Activated T-helper 2 cell treated with anti-CD3 and anti-CD28 coated beads, Interferon-gamma antibody, Interleukin-2, Interleukin-4, amounts not matched to agents 10 μg/mL and 5 μg/mL and 100 μg/mL, durations not matched to agents 14 hours and 24 hours and 36 hours (primary cell): ENCODE measurements at regions of chr12 and their contacts with region 1.

Region 1: DNA sequence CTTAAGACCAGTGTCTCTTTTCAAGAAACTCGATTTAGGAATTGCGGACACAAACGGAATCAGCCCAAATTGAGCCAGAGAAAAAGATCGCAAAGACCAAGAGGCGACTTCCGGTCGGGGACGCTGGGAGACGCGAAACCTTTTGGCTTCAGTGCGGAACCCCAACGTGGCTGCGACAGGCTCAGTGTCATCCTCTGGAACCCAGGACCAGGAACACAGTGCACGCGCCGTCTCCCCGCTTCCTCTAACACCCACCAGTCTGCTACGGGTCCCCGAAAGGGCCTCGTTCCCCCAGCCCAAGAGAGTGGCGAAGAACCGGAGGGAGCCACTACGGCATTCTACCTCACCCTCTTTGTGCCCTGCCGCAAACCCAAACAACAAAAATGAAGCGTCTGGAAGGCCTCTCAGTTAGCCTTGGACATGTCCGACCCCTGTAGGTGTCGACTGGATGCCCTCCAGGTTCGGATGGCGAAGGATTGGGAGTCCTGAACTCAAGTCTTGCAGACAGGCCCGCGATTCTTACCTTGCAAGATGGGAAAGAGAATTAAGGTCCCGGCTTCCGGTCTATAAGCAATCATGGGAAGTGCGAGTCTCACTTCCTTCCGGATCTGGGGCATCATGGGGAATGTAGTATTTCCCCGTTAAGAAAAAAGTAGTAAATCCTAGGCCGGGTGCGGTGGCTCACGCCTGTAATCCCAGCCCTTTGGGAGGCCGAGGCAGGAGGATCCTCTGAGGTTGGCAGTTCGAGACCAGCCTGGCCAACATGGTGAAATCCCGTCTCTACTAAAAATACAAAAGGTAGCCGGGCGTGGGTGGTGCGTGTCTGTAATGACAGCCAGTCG is at the start of gene RPL6:
- DNase-seq: peak; percentile 77
- H3K4me3 Mint-ChIP-seq: peak within 1 kb of the TSS; percentile 99
- H3K27ac Mint-ChIP-seq: peak within 1 kb of the TSS; percentile 100
- H3K4me1 Mint-ChIP-seq: peaks cover 27% of the 10 kb centered on the region
- H3K27me3 Mint-ChIP-seq: no peaks in the 10 kb centered on the region
- total RNA-seq, gene RPL6: 1,640 and 1,680 TPM in 2 replicates

Region 2: DNA sequence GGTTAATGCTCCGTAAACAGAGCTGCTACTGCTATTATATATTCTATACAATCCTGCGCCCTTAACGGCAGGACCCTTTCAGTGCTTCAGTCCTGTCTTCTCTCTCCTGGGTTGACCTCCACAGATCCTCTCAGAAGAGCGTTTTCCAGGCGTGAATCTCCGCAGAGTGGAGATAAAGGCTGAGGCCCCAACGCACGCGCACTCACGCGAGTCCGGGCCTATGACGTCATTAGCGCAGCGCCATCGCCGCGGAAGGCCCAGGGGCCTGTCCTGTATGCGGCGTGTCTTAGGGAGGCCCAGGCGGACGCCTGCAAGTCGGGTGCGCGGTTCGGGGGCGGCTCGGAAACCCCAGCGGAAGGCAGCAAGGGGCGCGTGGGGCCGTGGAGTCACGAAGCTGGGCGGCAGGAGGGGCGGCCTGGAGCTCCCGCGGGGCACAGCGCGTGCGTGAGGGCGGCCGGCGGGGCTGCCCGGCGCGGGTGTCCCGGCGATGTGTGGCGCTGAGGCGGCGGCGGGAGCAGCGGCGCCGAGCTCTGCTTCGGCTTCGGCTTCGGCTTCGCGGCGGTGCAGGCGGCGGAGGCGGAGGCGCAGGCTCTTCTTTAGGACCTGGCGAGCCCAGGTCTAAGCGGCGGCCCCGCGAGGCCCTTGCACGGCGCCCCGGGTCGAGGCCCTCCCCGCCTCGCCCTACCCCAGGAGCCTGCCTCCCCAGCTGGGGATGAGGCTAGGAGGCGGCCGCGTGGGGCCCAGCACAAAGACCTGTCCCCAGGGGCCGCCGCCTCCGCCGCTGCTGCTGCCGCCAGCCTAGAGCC is 567.3 kb before region 1 on chr12 and contains the start of gene MAPKAPK5:
- intact Hi-C with region 1: loop called (anchors 5 kb)
- DNase-seq: peak; percentile 95
- H3K4me3 Mint-ChIP-seq: peak within 1 kb of the TSS; percentile 97
- H3K27ac Mint-ChIP-seq: peak within 1 kb of the TSS; percentile 98
- H3K4me1 Mint-ChIP-seq: peaks cover 36% of the 10 kb centered on the region
- H3K27me3 Mint-ChIP-seq: no peaks in the 10 kb centered on the region
- total RNA-seq, gene MAPKAPK5: 66.4 and 68.1 TPM in 2 replicates

Region 3: GRCh38 chr12:111942557-111942956 is 466.7 kb before region 1 on chr12:
- intact Hi-C with region 1: loop called (anchors 1 kb)
- DNase-seq: no peak
- H3K4me3 Mint-ChIP-seq: no peak overlapping the region
- H3K27ac Mint-ChIP-seq: no peak overlapping the region
- H3K4me1 Mint-ChIP-seq: peaks cover 11% of the 10 kb centered on the region
- H3K27me3 Mint-ChIP-seq: no peaks in the 10 kb centered on the region

Region 4: DNA sequence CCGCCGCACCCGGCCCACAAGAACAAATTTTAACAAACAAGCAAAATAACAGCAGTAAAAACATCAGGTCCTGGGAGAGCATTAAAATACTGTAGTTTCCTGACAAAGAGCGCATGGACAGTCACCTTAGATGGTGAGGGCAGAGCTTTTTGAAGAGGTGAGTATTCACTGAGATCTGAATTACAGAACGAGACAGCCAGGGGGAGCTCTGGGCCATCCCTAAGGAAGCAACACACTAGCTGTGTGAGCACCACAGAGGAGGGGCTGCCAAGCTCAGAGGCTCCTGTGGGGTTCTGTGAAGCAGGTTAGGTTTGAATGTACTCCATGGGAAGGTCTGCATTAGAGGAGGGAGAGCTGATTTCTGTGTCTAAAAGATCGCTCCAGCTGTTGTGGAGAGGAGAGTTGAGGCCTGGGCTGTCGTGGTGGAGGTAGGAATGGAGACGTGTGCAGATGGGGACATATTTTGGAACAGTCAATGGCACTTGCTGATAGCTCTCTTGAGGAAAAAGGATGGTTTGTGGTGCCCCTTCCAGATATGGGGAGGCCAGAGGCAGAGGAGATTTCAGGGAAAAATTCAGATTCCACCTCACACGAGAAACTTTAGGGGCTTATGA is 211.1 kb before region 1 on chr12:
- intact Hi-C with region 1: loop called (anchors 1 kb)
- DNase-seq: peak; percentile 30
- H3K4me3 Mint-ChIP-seq: no peak overlapping the region
- H3K27ac Mint-ChIP-seq: no peak overlapping the region
- H3K4me1 Mint-ChIP-seq: peaks cover 4% of the 10 kb centered on the region
- H3K27me3 Mint-ChIP-seq: no peaks in the 10 kb centered on the region

Region 5: GRCh38 chr12:112303004-112303403 is 106.3 kb before region 1 on chr12:
- intact Hi-C with region 1: no loop called
- DNase-seq: peak; percentile 23
- H3K4me3 Mint-ChIP-seq: no peak overlapping the region
- H3K27ac Mint-ChIP-seq: peak overlapping the region; percentile 68
- H3K4me1 Mint-ChIP-seq: peaks cover 7% of the 10 kb centered on the region
- H3K27me3 Mint-ChIP-seq: no peaks in the 10 kb centered on the region

Region 6: DNA sequence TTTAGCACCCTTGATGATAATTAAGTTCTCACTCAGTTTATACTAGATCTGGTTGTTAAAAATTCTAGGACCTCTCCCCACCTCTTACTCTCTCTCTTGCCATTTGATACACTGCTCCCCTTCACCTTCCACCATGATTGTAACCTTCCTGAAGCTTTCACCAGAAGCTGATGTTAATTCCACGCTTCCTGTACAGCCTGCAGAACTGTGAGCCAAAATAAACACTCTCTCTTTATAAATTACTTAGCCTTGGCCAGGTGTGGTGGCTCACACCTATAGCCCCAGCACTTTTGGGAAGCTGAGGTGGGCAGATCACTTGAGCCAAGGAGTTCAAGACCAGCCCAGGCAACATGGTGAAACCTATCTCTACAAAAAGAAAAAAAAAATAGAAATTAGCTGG is 16.0 kb before region 1 on chr12:
- intact Hi-C with region 1: no loop called
- DNase-seq: no peak
- H3K4me3 Mint-ChIP-seq: no peak overlapping the region
- H3K27ac Mint-ChIP-seq: no peak overlapping the region
- H3K4me1 Mint-ChIP-seq: no peaks in the 10 kb centered on the region
- H3K27me3 Mint-ChIP-seq: peaks cover 6% of the 10 kb centered on the region